ENCODE measurements at regions of chr5 and their contacts with region 1.

Region 1: DNA sequence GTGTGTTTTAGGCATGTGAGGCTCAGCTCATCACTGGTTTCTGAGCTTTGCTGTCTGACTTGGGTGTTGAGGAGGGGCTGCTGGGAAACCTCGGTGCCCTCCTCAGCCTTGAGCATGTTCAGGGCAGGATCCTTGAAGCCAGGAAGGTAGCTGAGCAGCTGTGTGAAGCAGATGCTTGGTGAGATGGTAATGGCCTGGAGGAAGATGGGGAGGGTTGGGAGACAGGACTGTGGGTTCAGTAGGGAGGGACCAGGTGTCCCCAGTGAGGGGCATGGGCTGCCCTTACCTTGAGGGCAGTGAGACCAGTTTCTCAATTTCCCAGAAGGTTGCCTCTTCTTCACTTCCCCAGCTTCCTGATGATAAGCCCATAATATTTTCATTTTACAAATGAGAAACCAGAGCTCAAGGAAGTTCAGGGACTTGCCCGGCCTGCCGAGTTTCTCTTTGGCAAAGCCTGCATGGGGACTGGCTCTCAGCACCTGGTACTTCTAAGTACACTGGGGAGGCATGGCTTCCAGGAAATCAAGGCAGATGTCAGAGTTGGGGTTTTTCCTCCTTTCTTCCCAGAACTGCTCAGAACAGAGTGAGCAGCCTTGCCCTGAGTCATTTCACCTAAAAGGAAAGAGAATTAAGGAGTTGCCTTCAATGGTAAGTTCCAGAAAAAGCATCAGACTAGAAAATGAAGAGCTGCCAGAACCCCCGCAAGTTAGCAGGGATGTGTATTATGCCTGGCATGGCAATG is 225.7 kb downstream of the MAST4 start:
- DNase-seq: no peak

Region 2: DNA sequence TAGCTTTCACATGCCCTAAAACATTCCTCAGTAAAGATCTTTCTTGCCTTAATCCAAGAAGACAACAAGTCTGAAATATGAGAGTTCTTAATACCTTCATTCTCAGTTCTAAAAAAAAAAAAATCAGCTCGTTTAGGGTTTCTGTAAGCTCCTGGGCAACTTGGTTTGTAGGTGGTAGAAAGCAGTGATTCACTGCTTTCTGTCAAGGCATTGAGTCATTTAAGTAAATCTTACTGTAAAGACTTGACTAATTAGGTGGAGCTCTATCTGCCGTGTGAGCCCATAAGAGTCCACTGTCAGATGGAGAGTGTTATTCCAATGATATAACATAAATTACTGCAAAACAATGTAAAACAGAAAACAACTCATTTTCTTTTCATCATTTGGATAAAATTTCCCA is 281.8 kb before region 1 on chr5:
- intact Hi-C with region 1: no loop called
- DNase-seq: no peak

Region 3: DNA sequence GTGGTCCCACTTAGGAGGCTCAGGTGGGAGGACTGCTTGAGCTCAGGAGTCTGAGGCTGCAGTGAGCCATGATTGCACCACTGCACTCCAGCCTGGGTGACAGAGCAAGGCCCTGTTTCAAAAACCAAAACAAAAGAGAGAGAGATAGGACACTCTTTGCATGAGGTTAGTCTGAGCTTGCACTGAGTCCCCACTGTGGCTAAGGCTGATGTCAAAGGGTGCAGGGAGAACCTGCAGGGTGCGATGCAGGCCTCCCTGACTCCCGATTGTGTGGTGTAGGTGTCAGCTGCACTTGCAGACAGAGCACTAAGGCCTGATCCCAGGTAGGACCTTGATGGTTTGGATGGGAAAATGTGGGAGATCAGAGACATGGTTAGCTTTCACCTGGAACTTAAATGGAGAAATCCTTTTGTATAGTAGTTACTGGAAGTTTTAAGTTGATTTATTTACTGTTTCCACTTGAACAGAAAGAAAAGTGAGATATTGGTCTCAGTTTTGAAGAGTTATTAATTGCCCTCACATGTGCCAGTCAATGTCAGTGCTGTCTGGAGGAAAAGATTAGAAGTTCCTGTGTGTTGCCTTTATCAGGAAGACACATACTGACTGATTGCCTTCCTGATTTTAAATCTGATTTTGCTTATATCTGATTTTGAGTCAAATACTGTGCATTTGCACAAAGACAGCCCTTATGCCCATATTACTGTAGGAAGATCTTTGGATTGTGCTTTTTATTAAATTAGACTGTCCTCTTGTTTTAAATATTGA is 34.4 kb after region 1 on chr5:
- intact Hi-C with region 1: no loop called
- DNase-seq: no peak

Region 4: DNA sequence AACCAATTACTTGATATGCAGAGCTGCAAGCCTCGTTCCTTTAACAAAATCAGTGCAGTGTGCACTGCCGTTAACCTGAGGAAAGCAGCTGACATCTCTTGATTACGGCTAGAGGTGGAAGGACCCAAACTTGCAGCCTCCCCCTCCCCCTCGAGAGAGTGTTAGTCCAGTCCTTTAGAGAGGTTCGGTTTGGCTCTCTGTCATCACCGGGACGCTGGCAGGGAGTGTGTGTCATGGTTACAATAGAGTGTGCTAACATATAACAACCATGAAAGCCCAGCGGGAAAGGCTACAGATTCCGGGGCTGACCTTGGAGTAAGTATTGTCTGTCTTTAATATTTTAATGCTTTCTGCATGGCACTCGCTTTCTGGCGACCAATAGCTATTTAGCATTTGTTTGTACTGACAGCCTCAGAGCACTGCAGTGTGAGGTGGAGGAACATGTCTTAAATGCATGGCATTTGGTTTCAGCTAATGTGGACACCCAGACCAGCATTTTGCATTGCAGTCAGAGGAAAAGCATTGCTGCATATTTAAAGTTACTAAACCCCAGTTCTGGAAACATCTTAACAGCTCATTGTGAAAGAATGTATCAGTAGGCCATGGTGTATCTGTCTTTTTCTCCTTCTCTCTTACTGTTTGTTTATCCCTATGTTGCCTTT is 137.3 kb after region 1 on chr5:
- intact Hi-C with region 1: loop called (anchors 5 kb)
- DNase-seq: no peak

Region 5: DNA sequence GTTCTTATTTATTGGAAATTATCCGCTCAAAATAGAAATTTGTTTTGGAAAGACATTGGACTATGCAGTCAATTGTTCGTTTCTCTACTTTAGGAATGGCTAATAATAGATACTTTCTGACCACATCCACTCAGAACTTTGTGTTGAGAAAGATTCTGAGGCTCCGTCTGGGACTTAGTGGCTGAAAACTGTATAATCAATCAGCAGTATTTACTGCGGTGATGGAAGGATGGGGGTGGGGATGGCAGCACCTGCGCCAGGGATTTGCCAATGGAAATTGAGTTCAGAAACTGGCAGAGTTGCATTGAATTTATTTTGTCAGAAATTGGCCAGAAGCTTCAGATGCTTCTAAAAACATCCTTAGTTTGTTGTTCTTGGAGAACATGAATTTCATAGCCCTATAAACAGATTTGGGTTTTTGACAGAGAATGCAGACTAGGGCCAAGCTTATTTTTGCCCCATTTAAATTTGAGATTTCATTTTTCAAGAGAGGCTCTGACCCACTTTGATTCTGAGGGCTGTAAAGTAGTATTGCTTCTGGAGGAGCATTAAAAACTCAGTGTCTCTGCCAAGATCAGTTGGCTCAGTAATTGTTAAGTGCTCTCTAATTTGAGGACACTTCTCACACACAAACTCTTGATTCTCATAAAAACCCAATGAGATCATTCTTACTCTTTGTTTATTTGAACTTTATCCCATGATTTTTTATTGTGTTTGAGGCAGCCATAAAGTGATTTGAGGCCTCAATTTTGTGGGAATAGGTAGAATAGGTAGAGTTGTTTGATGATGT is 159.6 kb after region 1 on chr5:
- intact Hi-C with region 1: no loop called
- DNase-seq: no peak

Region 6: DNA sequence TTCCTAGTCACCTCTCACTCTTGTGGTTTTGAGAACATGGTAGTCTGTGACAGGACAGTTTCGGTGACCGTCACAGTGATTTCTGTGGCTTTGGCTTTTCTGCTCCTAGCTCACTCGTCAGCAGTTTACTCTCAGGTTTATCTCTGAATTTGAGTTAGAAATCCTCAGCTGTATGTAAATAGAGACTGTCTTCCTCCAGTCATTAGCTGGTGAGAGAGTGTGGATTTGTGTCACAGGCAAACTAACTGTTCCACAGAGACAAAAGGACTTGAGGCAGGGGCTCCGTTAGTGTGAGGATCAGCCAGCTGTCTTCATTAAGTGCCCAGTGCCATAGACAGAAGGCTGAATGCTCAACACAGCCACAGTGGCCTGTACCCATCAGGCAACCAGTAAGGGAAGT is 243.4 kb after region 1 on chr5:
- intact Hi-C with region 1: no loop called
- DNase-seq: no peak

Measured in cardiac septum (tissue), 1 donor.